SK-N-SH (cell line): ENCODE measurements at regions of chr1 and their contacts with region 1.

Region 1: DNA sequence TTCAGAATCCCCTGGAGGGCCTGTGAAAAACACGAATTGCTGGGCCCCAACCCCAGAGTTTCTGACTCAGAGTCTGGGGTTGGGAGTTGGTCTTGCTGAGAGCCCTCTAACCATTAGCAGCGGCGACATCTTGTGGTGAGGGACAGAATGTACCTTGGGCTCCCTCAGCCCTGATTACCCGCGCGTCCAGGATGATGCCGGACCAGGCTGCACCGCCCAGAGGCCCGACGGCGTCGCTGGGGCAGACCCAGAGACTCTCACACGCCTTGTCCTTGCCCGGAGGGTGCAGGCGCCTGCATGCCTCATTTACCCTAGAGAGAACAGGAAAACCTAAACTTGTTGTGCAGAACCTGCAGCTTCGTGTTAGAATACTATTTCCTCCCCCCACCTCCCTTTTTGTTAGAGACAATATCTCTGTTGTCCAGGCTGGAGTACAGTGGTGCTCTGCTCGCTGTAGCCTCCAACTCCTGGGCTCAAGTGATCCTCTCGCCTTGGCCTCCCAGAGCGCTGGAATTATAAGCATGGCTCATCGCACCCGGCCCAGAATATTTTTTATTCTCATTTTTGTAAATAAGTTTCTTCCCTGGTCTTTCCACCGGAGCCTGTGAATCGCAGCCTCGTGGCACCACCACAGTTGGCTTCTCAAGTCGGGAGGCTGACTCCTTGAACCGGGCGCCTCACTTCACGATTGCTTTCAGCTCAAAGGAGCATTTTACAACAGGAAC is 22.2 kb upstream of the RD3 start:
- DNase-seq: peak; percentile 93
- H3K4me3 ChIP-seq: no peak overlapping the region; a peak in 1 of 4 replicates
- H3K27ac ChIP-seq: no peak overlapping the region
- H3K4me1 ChIP-seq: peaks cover 0 to 6% of the 10 kb centered on the region in 2 experiments; a peak in 1 of 4 replicates
- H3K27me3 ChIP-seq: no peaks in the 10 kb centered on the region
- CTCF ChIP-seq: peak; percentile 78
- EP300 ChIP-seq: no peak
- RAD21 ChIP-seq: peak; percentile 95

Region 2: GRCh38 chr1:211323156-211324063 is 190.8 kb before region 1 on chr1:
- CTCF ChIA-PET with region 1: interaction called, 66 read pairs
- POLR2A ChIA-PET with region 1: no interaction called
- DNase-seq: peak; percentile 75
- H3K4me3 ChIP-seq: no peak overlapping the region; a peak in 1 of 4 replicates
- H3K27ac ChIP-seq: no peak overlapping the region
- H3K4me1 ChIP-seq: peaks cover 0 to 15% of the 10 kb centered on the region in 2 experiments; a peak in 1 of 4 replicates
- H3K27me3 ChIP-seq: no peaks in the 10 kb centered on the region
- CTCF ChIP-seq: peak; percentile 87
- EP300 ChIP-seq: no peak
- RAD21 ChIP-seq: peak; percentile 94

Region 3: DNA sequence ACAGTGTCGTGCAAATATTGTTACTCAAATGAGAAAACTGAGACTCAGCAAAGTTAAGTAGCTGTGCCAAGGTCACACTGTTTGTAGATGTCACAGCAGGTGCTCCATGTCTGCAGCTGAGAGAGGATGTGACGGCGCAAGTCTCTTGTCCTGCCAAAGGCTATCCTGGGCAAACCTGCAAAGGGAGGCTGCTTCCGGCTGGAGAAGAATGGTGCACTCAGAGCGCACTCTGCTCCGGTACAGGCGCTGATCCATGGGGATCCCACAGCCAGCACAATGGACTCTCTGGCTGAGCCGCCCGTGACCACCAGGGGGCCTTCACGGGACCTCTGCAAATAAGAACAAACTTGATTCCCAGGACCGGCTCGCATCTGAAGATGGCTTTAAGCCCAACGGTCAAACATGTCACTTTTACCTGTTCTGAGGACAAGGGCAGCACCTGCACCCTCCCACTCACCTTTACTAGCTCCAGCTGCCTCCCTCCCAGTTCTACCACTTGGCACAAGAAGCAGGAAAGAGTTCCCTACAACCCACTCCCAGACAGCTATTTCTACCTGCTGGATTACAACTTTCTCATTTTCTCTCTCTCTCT is 44.2 kb before region 1 on chr1:
- CTCF ChIA-PET with region 1: interaction called, 181 read pairs
- POLR2A ChIA-PET with region 1: interaction called, 3 read pairs
- DNase-seq: peak; percentile 83
- H3K4me3 ChIP-seq: peak overlapping the region in 1 of 2 experiments; percentile 22; a peak in 1 of 4 replicates
- H3K27ac ChIP-seq: no peak overlapping the region
- H3K4me1 ChIP-seq: peaks cover 0 to 12% of the 10 kb centered on the region in 2 experiments; a peak in 2 of 4 replicates
- H3K27me3 ChIP-seq: 0 out of 2 replicates have a peak, but pooled peaks cover 8% of the 10 kb centered on the region
- CTCF ChIP-seq: peak; percentile 90
- EP300 ChIP-seq: no peak
- RAD21 ChIP-seq: peak; percentile 76

Region 4: DNA sequence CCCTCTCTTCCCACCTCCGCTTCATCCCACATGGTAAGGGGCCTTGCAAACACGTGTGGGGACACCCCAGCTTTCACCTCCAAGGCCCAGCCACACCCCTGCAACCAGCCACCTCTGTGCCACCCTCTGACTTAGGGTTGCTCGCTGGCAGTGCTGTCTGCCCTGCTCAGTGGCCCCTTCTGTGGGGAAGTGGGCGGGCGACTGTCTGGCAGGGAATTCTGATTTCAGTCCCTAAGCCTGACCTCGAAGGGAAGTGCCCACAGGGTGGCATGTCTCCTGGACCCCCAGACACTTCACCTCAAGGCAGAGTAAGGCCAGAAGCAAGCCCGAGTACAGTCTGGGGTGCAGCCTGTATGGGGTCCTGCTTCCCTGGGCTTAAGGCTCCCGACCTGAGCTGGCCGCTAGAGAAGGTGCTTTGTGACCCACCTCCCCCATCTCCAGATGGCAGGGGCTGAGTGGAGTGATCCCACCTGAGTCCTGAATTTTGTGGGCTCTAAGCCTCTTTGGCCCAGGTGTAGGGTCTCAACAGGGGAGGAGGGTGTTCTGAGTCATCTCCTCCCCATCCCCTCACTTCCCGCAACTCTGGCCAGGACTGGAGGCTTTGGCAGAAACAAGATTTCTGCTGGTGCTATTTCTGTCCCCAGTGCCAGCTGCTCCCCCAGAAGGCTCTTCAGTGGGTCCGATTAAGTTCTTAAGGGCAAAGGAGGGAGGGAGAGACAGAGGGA is 29.3 kb before region 1 on chr1:
- CTCF ChIA-PET with region 1: interaction called, 192 read pairs
- POLR2A ChIA-PET with region 1: interaction called, 3 read pairs
- DNase-seq: no peak
- H3K4me3 ChIP-seq: no peak overlapping the region
- H3K27ac ChIP-seq: no peak overlapping the region
- H3K4me1 ChIP-seq: peaks cover 0 to 19% of the 10 kb centered on the region in 2 experiments; a peak in 2 of 4 replicates
- H3K27me3 ChIP-seq: no peaks in the 10 kb centered on the region
- CTCF ChIP-seq: no peak
- EP300 ChIP-seq: no peak
- RAD21 ChIP-seq: no peak

Region 5: DNA sequence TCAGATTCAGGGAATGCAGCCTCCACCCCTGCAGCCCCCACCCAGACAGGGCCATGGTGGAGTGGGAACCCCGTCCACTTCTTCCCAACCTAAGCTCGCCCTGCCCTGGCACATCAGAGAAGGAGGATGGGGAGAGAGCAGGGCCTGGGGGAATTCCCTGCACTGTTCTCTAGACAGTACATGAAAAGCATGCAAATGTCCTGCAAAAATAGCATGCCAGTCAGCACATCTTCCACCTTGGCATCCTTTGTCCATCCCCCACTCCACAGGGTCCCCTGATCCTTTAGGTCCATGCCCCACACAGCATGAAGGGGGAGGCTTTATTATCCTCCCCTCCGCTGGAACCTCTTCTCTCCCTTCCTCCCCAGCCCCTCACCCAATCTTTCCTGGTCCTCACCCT is 12.8 kb after region 1 on chr1:
- CTCF ChIA-PET with region 1: interaction called, 67 read pairs
- POLR2A ChIA-PET with region 1: no interaction called
- DNase-seq: no peak
- H3K4me3 ChIP-seq: no peak overlapping the region
- H3K27ac ChIP-seq: no peak overlapping the region
- H3K4me1 ChIP-seq: no peaks in the 10 kb centered on the region; a peak in 1 of 4 replicates
- H3K27me3 ChIP-seq: no peaks in the 10 kb centered on the region
- CTCF ChIP-seq: no peak
- EP300 ChIP-seq: no peak
- RAD21 ChIP-seq: no peak

Region 6: DNA sequence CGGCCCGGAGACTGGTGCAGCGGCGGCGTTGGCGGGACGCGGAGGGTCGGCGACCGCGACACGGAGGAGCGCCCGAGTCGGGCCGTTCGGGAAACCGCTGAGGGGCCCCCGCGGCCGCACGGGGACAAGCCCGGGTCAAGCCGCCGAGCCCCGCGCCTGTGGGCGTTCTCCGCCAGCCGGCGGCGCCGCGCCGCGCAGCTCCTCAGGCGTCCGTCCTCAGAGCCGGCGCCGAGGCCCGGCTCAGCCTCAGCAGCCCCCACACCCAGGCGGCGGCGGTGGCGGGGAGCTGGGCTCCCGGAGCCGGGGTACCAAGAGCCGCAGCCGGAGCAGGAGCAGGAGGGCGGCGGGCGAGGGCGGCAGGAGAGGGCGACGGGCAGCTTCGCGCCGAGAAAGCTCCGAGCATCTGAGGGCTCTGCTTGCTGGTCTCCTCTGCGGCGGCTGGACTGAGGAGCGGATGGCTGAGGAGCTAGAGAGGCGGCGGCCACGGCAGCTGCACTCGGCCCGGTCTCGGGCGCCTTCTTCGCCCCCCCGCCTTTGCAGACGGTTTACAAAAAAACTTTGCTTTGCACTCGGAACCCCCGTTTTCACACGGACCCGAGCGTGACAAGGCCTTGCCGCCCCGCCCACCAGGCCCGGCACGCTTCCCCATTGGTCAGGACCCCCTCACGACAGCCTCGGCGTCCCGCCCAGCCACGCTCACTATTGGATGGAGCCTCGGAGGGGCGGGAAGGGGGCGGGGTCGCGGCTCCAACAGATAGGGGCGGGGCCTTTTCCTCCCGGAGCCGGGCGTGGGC is 64.6 kb after region 1 on chr1 and contains the start of gene SLC30A1:
- CTCF ChIA-PET with region 1: interaction called, 12 read pairs
- POLR2A ChIA-PET with region 1: no interaction called
- DNase-seq: peak; percentile 100
- H3K4me3 ChIP-seq: peak within 1 kb of the TSS; percentile 89 to 98
- H3K27ac ChIP-seq: peak within 1 kb of the TSS; percentile 78 to 95
- H3K4me1 ChIP-seq: peaks cover 25 to 29% of the 10 kb centered on the region in 2 experiments; a peak in 3 of 4 replicates
- H3K27me3 ChIP-seq: no peaks in the 10 kb centered on the region
- CTCF ChIP-seq: no peak
- EP300 ChIP-seq: peak in 1 of 2 experiments; percentile 40; a peak in 2 of 4 replicates
- RAD21 ChIP-seq: no peak
- polyA plus RNA-seq, gene SLC30A1: 6.9 and 7.2 TPM in 2 replicates

Region 7: GRCh38 chr1:211654838-211655787 is 140.9 kb after region 1 on chr1:
- CTCF ChIA-PET with region 1: interaction called, 209 read pairs
- POLR2A ChIA-PET with region 1: no interaction called
- DNase-seq: peak; percentile 83
- H3K4me3 ChIP-seq: no peak overlapping the region; a peak in 1 of 4 replicates
- H3K27ac ChIP-seq: no peak overlapping the region
- H3K4me1 ChIP-seq: peaks cover 0 to 4% of the 10 kb centered on the region in 2 experiments; a peak in 1 of 4 replicates
- H3K27me3 ChIP-seq: no peaks in the 10 kb centered on the region
- CTCF ChIP-seq: peak; percentile 98
- EP300 ChIP-seq: no peak
- RAD21 ChIP-seq: peak; percentile 98